B cell (primary cell): ENCODE measurements at regions of chr19 and their contacts with region 1.

Region 1: GRCh38 chr19:50357178-50358100 is 8.0 kb downstream of the NAPSA start:
- DNase-seq: peak; percentile 94
- ATAC-seq: peak; percentile 81
- H3K4me3 ChIP-seq: peak overlapping the region; percentile 64 to 99 (median 68)
- H3K4me3 Mint-ChIP-seq: peak overlapping the region; percentile 94
- H3K27ac ChIP-seq: peak overlapping the region; percentile 95 to 99
- H3K27ac Mint-ChIP-seq: peak overlapping the region; percentile 98
- H3K4me1 ChIP-seq: peaks cover 13 to 34% of the 10 kb centered on the region in 2 donors
- H3K4me1 Mint-ChIP-seq: peaks cover 39% of the 10 kb centered on the region
- H3K27me3 ChIP-seq: no peaks in the 10 kb centered on the region
- H3K27me3 Mint-ChIP-seq: no peaks in the 10 kb centered on the region
- CTCF ChIP-seq: peak; percentile 89

Region 2: GRCh38 chr19:50368649-50369570 is 11.5 kb after region 1 on chr19:
- CTCF ChIA-PET with region 1: interaction called, 40 read pairs
- POLR2A ChIA-PET with region 1: interaction called, 7 read pairs
- intact Hi-C with region 1: loop called (anchors 1 kb)
- DNase-seq: peak; percentile 88
- ATAC-seq: peak; percentile 84
- H3K4me3 ChIP-seq: peak overlapping the region; percentile 67 to 80 (median 69)
- H3K4me3 Mint-ChIP-seq: peak overlapping the region; percentile 99
- H3K27ac ChIP-seq: peak overlapping the region; percentile 51 to 74
- H3K27ac Mint-ChIP-seq: peak overlapping the region; percentile 94
- H3K4me1 ChIP-seq: peaks cover 24 to 41% of the 10 kb centered on the region in 2 donors
- H3K4me1 Mint-ChIP-seq: peaks cover 30% of the 10 kb centered on the region
- H3K27me3 ChIP-seq: no peaks in the 10 kb centered on the region
- H3K27me3 Mint-ChIP-seq: no peaks in the 10 kb centered on the region
- CTCF ChIP-seq: peak; percentile 83

Region 3: DNA sequence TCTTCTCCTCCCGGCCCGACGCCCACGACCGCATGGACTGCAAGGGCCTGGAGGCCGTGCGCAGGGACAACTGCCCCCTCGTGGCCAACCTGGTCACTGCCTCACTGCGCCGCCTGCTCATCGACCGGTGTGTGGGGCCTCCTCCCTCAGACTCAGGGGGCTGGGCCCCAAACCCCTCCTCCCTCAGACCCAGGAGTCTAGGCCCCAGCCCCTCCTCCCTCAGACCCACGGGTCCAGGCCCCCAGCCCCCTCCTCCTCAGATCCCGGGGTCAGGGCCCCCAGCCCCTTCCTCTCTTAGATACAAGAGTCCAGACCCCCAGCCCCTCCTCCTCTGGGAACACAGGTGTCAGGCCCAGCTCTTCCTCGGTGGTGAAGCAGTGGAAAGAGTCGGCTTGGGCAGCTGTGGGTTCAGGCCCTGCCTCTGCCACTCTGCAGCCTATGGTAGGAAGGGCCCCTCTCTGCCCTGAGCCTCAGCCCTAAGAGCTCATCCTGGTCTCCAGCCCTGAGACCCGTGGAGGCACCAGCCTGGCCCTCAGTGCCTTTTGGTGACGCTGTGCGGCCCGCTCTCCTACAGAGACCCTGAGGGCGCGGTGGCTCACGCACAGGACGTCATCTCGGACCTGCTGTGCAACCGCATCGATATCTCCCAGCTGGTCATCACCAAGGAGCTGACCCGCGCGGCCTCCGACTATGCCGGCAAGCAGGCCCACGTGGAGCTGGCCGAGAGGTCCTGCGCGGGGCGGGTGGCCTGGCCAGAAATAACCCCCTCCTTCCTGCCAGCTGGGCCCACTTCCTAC is 57.6 kb after region 1 on chr19:
- CTCF ChIA-PET with region 1: interaction called, 23 read pairs
- POLR2A ChIA-PET with region 1: interaction called, 8 read pairs
- intact Hi-C with region 1: loop called (anchors 1 kb)
- DNase-seq: peak; percentile 91
- ATAC-seq: peak; percentile 21
- H3K4me3 ChIP-seq: peak overlapping the region in 4 of 5 experiments; percentile 44 to 60 (median 52)
- H3K4me3 Mint-ChIP-seq: peak overlapping the region; percentile 81
- H3K27ac ChIP-seq: peak overlapping the region; percentile 97 to 98
- H3K27ac Mint-ChIP-seq: peak overlapping the region; percentile 98
- H3K4me1 ChIP-seq: peaks cover 30 to 48% of the 10 kb centered on the region in 2 donors
- H3K4me1 Mint-ChIP-seq: peaks cover 37% of the 10 kb centered on the region
- H3K27me3 ChIP-seq: no peaks in the 10 kb centered on the region
- H3K27me3 Mint-ChIP-seq: no peaks in the 10 kb centered on the region
- CTCF ChIP-seq: peak; percentile 92

Region 4: DNA sequence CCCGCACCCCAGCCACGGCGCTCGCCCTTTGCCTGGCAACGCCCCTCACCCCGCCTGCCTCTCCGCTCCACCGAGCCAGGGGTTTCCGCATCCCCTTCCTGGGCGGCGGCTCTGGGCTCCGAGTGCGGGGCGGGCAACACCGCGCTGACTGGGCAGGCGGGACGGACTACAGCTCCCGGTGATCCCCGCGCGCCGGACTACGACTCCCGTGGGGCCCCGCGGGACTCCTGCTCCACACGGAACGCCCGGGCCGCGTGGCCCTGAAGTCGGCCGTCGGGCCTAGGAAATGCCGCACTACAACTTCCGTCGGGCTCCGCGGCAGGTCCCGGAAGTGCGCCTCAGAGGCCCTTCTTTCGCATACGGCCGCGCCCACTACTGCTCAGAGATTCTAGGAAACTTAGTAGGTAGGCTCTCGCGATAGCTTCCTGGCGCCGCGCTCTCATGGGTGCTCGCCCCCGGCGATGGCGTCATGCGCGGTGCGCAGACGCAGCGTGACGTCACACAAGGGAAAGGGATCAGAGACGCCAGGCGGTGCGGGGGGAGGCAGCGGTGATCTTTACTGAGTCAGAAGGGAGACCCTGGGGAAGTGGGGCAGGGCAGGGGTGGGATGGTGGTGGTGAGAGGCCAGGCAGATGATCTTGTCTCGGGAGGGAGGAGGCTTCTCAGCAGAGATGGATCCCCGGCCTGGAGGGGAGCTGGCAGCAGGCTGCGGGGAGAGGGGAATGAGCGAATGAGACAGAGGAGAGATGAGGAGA is 153.8 kb after region 1 on chr19 and contains the start of gene JOSD2:
- CTCF ChIA-PET with region 1: interaction called, 6 read pairs
- POLR2A ChIA-PET with region 1: interaction called, 10 read pairs
- intact Hi-C with region 1: loop called (anchors 1 kb)
- DNase-seq: peak; percentile 99
- ATAC-seq: peak; percentile 94
- H3K4me3 ChIP-seq: peak within 1 kb of the TSS; percentile 19 to 84 (median 62)
- H3K4me3 Mint-ChIP-seq: peak within 1 kb of the TSS; percentile 96
- H3K27ac ChIP-seq: peak within 1 kb of the TSS; percentile 87 to 98
- H3K27ac Mint-ChIP-seq: peak within 1 kb of the TSS; percentile 100
- H3K4me1 ChIP-seq: peaks cover 14 to 20% of the 10 kb centered on the region in 2 donors
- H3K4me1 Mint-ChIP-seq: peaks cover 17% of the 10 kb centered on the region
- H3K27me3 ChIP-seq: peaks cover 0 to 25% (median 2%) of the 10 kb centered on the region in 4 experiments
- H3K27me3 Mint-ChIP-seq: peaks cover 3% of the 10 kb centered on the region
- CTCF ChIP-seq: no peak
- total RNA-seq, gene JOSD2: 32.8 TPM in 2 replicates

Region 5: DNA sequence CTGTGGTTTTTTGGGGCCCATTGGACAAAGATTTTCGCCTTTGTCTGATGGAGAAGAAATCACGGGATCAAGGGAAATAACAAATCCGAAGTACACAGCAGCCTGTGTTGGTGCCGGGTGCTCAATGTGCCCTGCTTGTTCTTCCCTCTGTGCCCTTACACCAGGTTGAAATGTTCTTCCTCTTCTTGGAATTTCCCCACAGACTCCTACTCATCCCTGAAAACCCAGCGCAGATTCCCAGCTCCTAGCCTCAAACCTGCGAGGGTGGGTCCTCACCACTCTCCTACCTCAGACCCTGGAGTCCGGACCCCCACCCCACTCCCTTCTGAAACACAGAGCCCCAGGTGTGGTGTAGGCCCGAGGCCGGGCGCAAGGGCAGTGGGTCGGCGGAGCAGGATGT is 427.9 kb after region 1 on chr19:
- CTCF ChIA-PET with region 1: interaction called, 12 read pairs
- POLR2A ChIA-PET with region 1: interaction called, 7 read pairs
- intact Hi-C with region 1: no loop called
- DNase-seq: no peak
- ATAC-seq: no peak
- H3K4me3 ChIP-seq: no peak overlapping the region
- H3K4me3 Mint-ChIP-seq: no peak overlapping the region
- H3K27ac ChIP-seq: no peak overlapping the region
- H3K27ac Mint-ChIP-seq: no peak overlapping the region
- H3K4me1 ChIP-seq: peaks cover 0 to 6% of the 10 kb centered on the region in 2 donors
- H3K4me1 Mint-ChIP-seq: peaks cover 3% of the 10 kb centered on the region
- H3K27me3 ChIP-seq: peaks cover 0 to 19% (median 3%) of the 10 kb centered on the region in 4 experiments
- H3K27me3 Mint-ChIP-seq: peaks cover 16% of the 10 kb centered on the region
- CTCF ChIP-seq: no peak